IMR-90 (cell line): ENCODE measurements at regions of chr9 and their contacts with region 1.

Region 1: DNA sequence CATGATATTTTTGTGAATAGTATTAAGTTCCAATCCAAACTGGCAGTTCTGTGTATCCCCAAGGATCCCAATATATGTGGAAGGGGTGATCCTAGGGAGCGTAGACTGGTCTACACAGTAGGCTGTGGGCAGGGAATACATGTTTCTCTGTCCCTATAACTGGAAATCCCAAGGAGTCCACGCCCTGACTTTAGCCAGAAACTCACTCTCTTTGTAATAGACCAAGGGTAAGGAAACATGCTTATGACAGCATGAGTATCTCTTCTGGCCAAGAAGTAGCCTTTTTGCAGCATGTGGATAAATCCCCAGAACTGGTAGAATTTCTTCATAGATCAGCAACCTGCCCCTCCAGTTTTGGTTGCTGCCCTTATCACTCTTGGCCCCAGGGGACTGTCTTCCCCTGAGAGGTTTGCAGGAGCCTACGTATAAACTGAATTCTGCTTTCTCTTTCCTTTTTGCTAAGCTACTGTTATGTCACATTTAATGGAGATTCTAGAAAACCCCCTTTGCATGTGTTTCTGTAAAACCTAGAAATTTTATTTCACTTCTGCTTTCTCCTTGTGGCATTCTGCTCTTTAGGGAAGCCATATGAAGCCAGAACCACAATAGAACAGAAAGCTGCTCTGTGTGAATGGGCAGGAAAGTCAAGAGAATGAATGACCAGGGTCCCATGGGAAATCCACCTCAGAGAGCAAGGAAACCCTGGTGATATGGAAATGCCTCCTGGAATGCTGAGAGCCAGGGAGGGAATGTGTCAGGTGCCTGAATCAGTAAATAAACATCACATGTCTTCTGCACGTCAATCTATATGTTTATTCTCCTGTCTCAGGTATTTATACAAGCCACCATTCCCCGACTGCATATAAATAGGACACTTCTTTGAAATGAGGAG is 3.5 kb downstream of the IFNA2 start:
- DNase-seq: no peak
- ATAC-seq: no peak
- H3K4me3 ChIP-seq: no peak overlapping the region
- H3K27ac ChIP-seq: no peak overlapping the region
- H3K4me1 ChIP-seq: no peaks in the 10 kb centered on the region
- H3K27me3 ChIP-seq: peaks cover 31% of the 10 kb centered on the region
- CTCF ChIP-seq: no peak
- POLR2A ChIP-seq: no peak
- RAD21 ChIP-seq: no peak

Region 2: DNA sequence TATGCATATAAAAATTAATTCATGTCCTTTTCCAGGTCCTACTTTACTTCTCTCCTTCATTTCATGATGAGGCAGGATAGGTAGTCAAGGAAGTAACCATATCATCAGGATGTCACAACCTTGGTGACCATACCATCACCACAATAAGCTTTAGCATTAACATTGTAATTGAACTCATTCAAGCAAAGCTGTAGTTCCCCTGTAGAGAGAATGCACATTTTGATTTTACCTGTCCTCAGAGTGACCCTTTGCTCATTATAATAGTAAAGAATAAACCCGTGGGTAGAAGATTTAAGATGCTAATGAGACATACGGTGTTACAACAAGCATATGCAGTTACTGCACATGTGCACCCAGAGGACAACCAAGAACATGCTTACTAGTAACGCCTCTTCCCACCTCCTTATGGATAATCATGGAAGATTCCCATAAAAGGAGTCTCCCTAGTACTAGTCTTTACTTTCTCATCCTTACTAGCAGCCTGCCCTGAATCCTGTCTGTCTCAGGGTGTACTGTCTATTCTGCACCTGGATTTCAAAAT is 33.2 kb before region 1 on chr9:
- CTCF ChIA-PET with region 1: interaction called, 4 read pairs
- POLR2A ChIA-PET with region 1: no interaction called
- dilution Hi-C with region 1: no loop called
- in situ Hi-C with region 1: no loop called
- intact Hi-C with region 1: loop called (anchors 5 kb)
- DNase-seq: no peak
- ATAC-seq: no peak
- H3K4me3 ChIP-seq: no peak overlapping the region
- H3K27ac ChIP-seq: no peak overlapping the region
- H3K4me1 ChIP-seq: no peaks in the 10 kb centered on the region
- H3K27me3 ChIP-seq: peaks cover 8% of the 10 kb centered on the region
- CTCF ChIP-seq: no peak
- POLR2A ChIP-seq: no peak
- RAD21 ChIP-seq: no peak

Region 3: GRCh38 chr9:21542787-21543186 is 161.1 kb after region 1 on chr9:
- CTCF ChIA-PET with region 1: no interaction called
- POLR2A ChIA-PET with region 1: no interaction called
- dilution Hi-C with region 1: no loop called
- in situ Hi-C with region 1: no loop called
- intact Hi-C with region 1: no loop called
- DNase-seq: no peak
- ATAC-seq: no peak
- H3K4me3 ChIP-seq: no peak overlapping the region
- H3K27ac ChIP-seq: no peak overlapping the region
- H3K4me1 ChIP-seq: peaks cover 4% of the 10 kb centered on the region; the same call in 1 of the 2 replicates
- H3K27me3 ChIP-seq: no peaks in the 10 kb centered on the region
- CTCF ChIP-seq: no peak
- POLR2A ChIP-seq: no peak
- RAD21 ChIP-seq: no peak